ENCODE measurements at regions of chr4 and their contacts with region 1.

Region 1: DNA sequence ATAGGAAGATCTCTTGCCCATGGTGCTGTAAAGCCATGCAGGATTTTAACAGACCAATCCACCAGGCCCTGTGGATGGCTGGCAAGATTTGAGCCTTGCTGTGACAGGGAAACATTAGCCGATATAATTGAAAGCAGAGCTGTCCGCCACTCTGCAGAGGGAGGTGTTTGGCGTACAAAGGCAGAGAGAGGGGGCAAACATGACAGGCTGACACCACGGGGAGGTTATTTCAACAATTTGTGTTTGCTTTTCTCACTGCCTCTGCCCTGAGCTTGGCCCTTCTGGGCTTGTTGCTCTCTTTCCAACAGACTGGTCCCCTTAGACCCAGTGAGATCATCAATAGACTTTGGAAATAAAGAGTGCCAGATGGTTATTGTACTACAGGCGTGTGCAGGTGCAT is 59.4 kb downstream of the CLNK start:
- DNase-seq: no peak
- H3K4me3 ChIP-seq: no peak overlapping the region
- H3K27ac ChIP-seq: no peak overlapping the region
- H3K4me1 ChIP-seq: no peaks in the 10 kb centered on the region
- H3K27me3 ChIP-seq: no peaks in the 10 kb centered on the region
- CTCF ChIP-seq: no peak
- POLR2A ChIP-seq: no peak

Region 2: DNA sequence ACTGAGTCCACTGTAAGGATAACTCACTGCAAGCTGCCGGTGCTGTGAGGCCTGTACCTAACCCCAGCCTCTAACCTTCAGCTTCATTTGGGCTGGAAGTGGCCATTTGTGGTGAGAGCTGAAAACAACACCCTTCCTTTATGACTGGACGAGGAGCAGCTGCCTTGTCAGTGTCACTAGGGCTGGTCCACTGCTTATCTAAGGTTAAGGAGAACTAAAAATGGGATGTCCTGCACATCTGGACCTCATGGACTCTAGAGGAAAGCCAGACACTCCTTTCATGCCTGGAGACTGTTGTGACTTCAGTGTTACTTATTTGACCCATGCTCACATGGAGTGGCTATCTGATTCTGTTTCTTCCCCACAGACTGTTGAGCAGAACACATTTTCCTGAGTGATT is 307.8 kb before region 1 on chr4:
- intact Hi-C with region 1: loop called (anchors 5 kb)
- DNase-seq: no peak
- H3K4me3 ChIP-seq: no peak overlapping the region
- H3K27ac ChIP-seq: no peak overlapping the region
- H3K4me1 ChIP-seq: no peaks in the 10 kb centered on the region
- H3K27me3 ChIP-seq: no peaks in the 10 kb centered on the region
- CTCF ChIP-seq: no peak
- POLR2A ChIP-seq: no peak